ENCODE measurements at regions of chr4 and their contacts with region 1.

Region 1: DNA sequence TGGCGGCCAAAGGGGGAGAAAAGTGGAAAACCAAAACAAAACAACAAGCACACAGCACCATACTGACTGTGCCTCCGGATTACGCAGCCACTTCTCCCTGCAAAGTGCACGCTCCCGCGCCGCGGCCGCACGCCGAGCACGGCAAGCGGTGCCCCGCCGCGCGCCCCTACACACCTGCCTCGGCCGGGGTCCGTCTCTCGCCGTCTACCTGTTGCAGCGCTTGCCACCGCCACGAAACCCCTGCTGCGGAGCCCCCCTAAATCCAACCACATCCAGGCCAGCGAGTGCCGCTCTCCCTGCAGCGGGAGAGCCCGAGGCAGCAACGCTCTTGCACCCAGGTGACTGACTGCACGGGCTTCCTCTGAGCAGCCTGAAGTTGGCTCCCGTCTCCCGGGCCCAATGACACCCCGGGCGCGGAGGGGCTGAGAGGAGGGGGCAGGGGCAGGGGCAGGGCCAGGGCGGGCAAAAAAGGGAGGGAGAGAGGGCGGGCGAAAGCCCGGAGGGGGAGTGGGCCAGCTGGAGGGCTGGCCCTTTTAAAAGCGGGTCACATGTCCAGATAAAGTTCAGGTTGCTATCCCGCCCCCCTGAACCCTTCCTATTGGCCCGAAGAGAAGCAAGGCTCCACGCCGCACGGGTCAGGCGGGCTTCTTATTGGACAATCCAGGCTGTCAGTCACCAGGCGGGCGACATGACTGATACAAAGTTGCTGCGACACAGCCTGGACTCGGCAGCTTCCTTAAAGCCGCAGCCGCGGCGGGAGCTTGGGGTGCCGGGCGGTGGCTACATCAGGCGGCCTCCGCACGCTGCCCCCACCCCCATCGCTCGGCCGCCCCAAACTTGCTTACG is at the start of gene NR3C2:
- DNase-seq: peak; percentile 98
- H3K4me3 ChIP-seq: peak within 1 kb of the TSS; percentile 76 to 96 (median 94)
- H3K27ac ChIP-seq: peak within 1 kb of the TSS; percentile 91 to 98 (median 95)
- H3K4me1 ChIP-seq: peaks cover 7 to 77% (median 45%) of the 10 kb centered on the region in 6 donors
- H3K27me3 ChIP-seq: peaks cover 0 to 50% (median 0%) of the 10 kb centered on the region in 7 donors
- CTCF ChIP-seq: peak in 1 of 11 experiments; percentile 5
- POLR2A ChIP-seq: peak; percentile 95 to 99 (median 96)
- total RNA-seq, gene NR3C2: 13.6 to 25.9 (median 18.2) TPM

Region 2: DNA sequence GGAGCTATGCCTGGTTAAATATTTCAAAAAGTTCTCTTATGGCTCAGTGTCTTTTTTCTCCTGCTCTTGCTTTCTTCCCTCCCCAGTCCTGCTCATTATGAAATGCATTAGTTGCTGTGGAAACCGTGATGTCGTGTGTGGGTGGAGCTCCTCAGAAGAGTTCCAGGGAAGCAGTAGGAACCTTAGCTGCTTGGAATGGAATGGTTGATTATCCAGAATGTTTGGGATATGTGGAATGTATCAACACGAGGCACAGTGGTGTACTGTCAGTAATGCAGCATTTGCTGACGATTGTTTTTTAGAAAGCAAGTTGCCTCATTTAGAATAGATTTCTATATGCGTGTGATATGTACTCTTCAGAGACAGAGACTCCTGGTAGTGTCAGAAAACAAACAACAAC is 377.1 kb before region 1 on chr4:
- intact Hi-C with region 1: loop called (anchors 10 kb)
- DNase-seq: no peak
- H3K4me3 ChIP-seq: no peak overlapping the region
- H3K27ac ChIP-seq: no peak overlapping the region
- H3K4me1 ChIP-seq: peaks cover 0 to 36% (median 14%) of the 10 kb centered on the region in 6 donors
- H3K27me3 ChIP-seq: no peaks in the 10 kb centered on the region
- CTCF ChIP-seq: no peak
- POLR2A ChIP-seq: no peak

Region 3: DNA sequence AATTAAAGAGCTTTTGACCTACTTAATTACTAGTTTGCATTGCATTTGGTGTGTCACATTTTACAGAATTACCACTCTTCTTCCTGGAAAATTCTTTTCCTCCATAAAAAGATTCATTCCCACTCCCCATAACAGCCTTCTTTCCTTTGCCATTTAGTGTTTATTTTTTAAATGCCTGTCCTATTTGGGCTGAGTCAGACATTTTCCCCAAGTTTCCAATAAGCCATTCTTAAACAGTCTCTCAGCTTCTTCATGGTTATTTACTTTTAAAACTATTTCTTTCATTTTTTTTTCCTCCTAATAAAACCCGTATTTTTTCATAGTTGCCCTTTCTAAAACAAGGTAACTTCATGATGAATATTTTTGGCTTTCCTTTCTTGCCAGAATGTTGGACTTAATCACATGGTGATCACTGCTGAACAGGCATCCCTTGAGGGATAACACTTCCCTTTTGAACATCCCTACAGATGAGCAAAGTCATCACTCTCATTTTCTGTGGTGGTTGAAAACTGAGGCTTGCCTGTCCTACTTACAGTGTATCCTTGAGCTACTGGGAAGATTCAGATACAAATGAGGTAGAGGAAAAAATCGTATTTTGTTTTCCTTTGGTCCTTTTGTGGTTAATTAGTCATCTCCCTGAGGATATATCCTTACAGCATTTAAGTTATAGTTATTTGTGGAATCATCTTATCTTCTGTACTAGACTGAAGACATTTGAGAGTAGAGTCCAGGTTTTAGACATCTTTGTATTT is 520.5 kb after region 1 on chr4:
- intact Hi-C with region 1: no loop called
- DNase-seq: no peak
- H3K4me3 ChIP-seq: no peak overlapping the region
- H3K27ac ChIP-seq: no peak overlapping the region
- H3K4me1 ChIP-seq: no peaks in the 10 kb centered on the region
- H3K27me3 ChIP-seq: no peaks in the 10 kb centered on the region
- CTCF ChIP-seq: no peak
- POLR2A ChIP-seq: no peak

Measured in spleen (tissue), 13 donors.